ENCODE measurements at regions of chr22 and their contacts with region 1.

Region 1: DNA sequence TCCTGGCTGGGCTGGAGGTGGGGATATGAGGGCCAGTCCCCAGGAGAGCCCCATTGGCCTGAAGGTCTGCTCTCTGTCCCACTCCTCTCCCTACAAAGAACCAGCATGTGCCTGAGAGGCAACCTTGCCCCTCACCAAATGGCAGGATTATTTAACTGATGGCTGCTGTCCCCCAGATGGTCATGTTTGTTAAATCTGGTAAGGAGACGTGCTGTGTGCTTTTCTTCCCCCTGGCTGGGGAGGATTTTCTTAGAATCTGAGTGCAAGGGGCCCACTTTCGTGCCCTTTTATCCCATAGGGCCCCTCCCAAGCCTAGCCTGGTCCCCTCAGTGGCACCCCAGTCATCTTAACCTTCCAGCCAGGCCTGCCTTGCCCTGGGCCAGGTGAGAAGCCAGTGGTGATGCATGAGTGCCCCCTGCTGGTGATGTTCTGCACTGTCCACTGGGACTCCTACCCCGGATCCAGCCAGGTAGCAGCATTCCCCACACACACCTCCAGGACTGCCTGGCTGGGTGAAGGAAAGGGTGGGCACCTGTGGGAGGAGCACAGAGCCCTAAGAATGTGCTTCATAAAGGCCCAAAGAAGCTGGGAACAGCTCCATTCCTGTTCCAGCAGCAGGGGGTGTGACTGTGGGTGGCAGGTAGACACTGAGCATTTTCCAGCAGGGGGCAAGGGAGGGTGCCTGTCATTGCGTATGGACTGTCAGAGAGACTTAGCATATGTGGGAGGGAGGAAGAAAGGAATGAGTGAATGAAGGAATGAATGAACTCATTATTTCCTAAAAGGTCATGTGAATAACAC is 28.9 kb downstream of the MFNG start:
- DNase-seq: peak; percentile 93
- H3K4me3 Mint-ChIP-seq: no peak overlapping the region
- H3K27ac Mint-ChIP-seq: no peak overlapping the region
- H3K4me1 Mint-ChIP-seq: no peaks in the 10 kb centered on the region
- H3K27me3 Mint-ChIP-seq: no peaks in the 10 kb centered on the region

Region 2: DNA sequence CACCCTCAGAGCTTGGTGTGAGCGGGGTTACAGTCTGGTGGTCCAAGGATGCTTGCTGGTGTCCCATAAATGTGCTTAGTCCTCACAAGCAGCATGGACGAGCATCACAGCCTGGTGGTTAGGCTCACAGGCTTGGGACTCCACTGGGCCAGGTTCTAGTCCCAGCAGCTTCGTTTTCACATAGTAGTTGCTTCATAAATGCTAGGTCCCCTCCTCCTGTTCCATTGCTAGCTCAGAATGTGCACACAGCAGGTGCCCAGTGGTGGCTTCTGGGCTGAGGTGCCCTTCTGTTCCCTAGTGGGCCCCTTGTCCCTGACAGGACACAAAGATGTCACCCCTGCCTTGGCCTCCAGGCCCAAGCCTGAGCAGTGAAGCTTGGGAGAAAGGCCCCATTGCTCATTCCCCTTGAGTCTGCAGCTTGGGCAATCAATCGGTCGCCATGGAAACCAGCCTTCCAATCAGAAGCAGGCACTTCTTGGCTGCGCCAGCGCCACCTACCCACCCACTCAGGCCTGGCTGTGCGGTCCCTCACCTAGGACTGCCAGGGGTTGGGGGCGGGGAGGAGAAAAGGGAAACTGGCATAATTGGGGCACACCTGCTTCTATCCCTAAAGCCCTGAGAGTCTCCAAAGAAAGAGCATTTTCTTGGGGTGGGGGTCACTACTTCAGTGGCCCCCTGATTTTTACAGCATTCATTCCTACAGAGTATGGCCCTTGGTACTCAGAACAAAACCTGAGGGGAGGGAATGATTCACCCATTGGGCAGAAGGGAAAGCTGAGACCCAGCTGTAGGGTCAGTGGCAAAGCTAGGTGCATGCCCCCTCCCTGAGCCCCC is 126.9 kb before region 1 on chr22:
- CTCF ChIA-PET with region 1: interaction called, 3 read pairs
- intact Hi-C with region 1: loop called (anchors 5 kb)
- DNase-seq: peak; percentile 65
- H3K4me3 Mint-ChIP-seq: no peak overlapping the region
- H3K27ac Mint-ChIP-seq: no peak overlapping the region
- H3K4me1 Mint-ChIP-seq: peaks cover 12% of the 10 kb centered on the region
- H3K27me3 Mint-ChIP-seq: peaks cover 50% of the 10 kb centered on the region

Region 3: DNA sequence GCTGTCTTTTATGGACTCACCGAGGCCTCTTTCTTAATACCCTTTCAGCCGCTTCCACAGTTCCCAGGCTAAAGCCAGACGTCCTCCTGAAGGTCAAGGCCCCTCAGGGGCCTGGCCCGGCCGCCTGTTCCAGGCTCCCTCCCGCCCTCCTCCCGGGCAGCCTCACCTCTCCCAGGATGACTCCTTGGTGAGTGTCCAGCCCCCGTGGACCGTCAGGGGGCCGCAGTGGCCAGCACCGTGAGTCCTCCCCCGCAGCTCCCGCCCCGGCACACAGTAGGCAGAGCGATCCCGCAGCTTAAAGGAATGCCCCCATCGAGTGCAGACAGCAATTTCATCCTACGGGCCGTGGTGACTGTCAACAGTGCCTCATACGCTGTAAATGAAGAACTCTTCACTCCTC is 63.0 kb before region 1 on chr22:
- CTCF ChIA-PET with region 1: no interaction called
- intact Hi-C with region 1: no loop called
- DNase-seq: no peak
- H3K4me3 Mint-ChIP-seq: no peak overlapping the region
- H3K27ac Mint-ChIP-seq: no peak overlapping the region
- H3K4me1 Mint-ChIP-seq: no peaks in the 10 kb centered on the region
- H3K27me3 Mint-ChIP-seq: peaks cover 6% of the 10 kb centered on the region

Measured in activated naive CD4-positive, alpha-beta T cell treated with anti-CD3 and anti-CD28 coated beads for 36 hours (primary cell).